Activated CD4-positive, alpha-beta memory T cell treated with anti-CD3 and anti-CD28 coated beads, Interleukin-2, amount 10 ng/mL, durations not matched to agents 7 days and 5 days (primary cell): ENCODE measurements at regions of chr1 and their contacts with region 1.

Region 1: GRCh38 chr1:207885129-207886032 is 25.5 kb downstream of the CD34 start:
- DNase-seq: peak; percentile 77
- H3K4me3 Mint-ChIP-seq: no peak overlapping the region
- H3K27ac Mint-ChIP-seq: peak overlapping the region; percentile 97
- H3K4me1 Mint-ChIP-seq: peaks cover 43% of the 10 kb centered on the region
- H3K27me3 Mint-ChIP-seq: peaks cover 3% of the 10 kb centered on the region

Region 2: GRCh38 chr1:207486198-207486597 is 399.2 kb before region 1 on chr1:
- CTCF ChIA-PET with region 1: no interaction called
- POLR2A ChIA-PET with region 1: no interaction called
- DNase-seq: no peak
- H3K4me3 Mint-ChIP-seq: no peak overlapping the region
- H3K27ac Mint-ChIP-seq: no peak overlapping the region
- H3K4me1 Mint-ChIP-seq: no peaks in the 10 kb centered on the region
- H3K27me3 Mint-ChIP-seq: peaks cover 24% of the 10 kb centered on the region

Region 3: GRCh38 chr1:207863893-207864535 is 21.4 kb before region 1 on chr1:
- CTCF ChIA-PET with region 1: interaction called, 423 read pairs
- POLR2A ChIA-PET with region 1: interaction called, 163 read pairs
- DNase-seq: peak; percentile 71
- H3K4me3 Mint-ChIP-seq: peak overlapping the region; percentile 50
- H3K27ac Mint-ChIP-seq: peak overlapping the region; percentile 86
- H3K4me1 Mint-ChIP-seq: peaks cover 65% of the 10 kb centered on the region
- H3K27me3 Mint-ChIP-seq: no peaks in the 10 kb centered on the region

Region 4: DNA sequence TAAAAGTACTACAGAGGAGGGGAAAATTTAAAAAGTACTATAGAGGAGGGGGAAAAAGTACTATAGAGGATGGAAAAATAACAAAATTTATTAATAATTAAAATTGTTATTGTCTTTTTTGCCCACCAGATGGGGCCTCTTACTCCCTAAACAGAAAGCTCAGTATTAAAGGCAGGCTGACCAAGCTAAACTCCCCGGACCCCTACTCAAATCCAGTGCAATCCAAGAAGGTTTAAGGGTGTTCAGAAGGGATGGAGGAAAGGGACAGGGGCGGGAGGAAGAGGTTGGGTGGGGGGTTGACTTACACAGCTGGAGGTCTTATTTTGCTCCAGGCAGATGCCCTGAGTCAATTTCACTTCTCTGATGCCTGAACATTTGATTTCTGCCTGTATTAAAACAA is 11.8 kb after region 1 on chr1:
- CTCF ChIA-PET with region 1: interaction called, 51 read pairs
- POLR2A ChIA-PET with region 1: interaction called, 4 read pairs
- DNase-seq: no peak
- H3K4me3 Mint-ChIP-seq: no peak overlapping the region
- H3K27ac Mint-ChIP-seq: no peak overlapping the region
- H3K4me1 Mint-ChIP-seq: peaks cover 21% of the 10 kb centered on the region
- H3K27me3 Mint-ChIP-seq: peaks cover 7% of the 10 kb centered on the region

Region 5: DNA sequence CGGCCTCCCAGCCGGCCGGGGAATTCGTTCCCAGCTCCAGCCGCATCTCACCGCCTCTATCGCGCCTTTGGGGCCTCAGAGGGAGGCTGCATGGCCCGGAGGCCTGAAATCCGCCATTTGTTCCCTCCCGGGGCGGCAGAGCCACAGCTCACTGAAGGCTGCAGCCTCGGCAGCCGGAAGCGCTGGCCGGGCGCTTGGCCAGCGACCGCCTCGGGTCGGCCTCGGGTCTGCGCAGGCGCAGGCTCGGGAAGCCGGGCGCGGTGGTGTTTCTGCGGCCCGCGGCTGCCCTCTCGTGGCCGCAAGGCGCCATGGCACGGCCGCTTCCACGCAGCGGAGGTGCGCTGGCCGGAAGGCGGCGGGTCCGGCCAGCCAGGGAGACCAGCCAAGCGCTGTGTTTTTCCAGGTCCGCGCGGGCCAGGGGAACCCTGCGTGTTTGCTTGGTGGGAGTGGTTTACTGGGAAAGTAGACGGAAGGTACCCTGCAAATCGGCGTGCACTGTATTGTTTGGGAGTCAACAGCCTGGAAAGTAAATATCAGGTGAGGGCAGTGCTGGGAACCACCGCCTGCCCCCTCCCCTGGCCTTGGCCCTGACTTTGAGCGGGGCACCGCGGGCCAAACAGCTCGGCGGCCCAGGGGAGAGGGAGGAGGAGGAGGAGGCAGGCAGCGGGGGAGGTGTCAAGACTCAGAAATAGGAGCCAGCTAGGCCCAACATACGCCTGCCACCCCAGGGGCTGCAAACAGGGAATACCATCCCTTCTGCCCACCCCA is 78.2 kb after region 1 on chr1:
- CTCF ChIA-PET with region 1: interaction called, 243 read pairs
- POLR2A ChIA-PET with region 1: interaction called, 30 read pairs
- DNase-seq: peak; percentile 87
- H3K4me3 Mint-ChIP-seq: peak overlapping the region; percentile 74
- H3K27ac Mint-ChIP-seq: peak overlapping the region; percentile 36
- H3K4me1 Mint-ChIP-seq: peaks cover 9% of the 10 kb centered on the region
- H3K27me3 Mint-ChIP-seq: peaks cover 42% of the 10 kb centered on the region

Region 6: DNA sequence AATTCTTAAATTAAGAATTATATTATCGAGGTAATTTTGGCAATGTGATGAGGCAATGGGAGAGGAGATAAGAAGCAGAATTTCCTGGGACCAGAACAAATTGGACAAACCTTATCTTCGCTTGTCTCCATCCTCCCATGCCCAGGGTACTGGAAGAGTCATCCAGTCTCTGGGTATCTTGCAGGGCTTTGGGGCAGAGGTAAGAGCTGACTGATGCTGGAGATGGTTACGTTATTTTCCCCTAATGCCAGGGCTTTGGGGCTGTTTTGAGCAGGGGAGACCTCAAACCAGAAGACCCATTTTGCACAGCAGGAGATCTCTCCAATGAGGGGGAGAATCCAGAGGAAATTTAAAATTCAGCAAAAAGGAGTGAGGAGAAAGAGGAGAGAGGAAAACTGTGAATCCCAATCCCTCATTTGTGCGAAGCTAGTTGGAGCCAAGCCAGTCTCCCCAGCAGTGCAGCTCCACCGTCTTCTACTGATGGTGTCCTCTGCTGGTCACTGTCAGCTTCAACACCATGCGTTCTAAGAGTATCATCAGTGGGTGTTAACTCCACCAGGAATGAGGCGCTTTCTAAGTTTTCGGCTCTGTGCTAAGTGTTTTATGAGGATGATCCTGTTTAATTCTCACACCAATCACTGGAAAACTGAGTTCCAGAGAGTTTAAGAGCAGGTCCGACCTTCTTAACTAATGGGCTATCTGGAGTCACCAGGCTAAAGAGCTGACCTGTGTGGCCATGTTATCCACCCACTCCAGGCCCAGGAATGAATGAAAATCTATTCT is 112.3 kb after region 1 on chr1:
- CTCF ChIA-PET with region 1: interaction called, 23 read pairs
- POLR2A ChIA-PET with region 1: no interaction called
- DNase-seq: peak; percentile 58
- H3K4me3 Mint-ChIP-seq: no peak overlapping the region
- H3K27ac Mint-ChIP-seq: no peak overlapping the region
- H3K4me1 Mint-ChIP-seq: no peaks in the 10 kb centered on the region
- H3K27me3 Mint-ChIP-seq: peaks cover 17% of the 10 kb centered on the region

Region 7: DNA sequence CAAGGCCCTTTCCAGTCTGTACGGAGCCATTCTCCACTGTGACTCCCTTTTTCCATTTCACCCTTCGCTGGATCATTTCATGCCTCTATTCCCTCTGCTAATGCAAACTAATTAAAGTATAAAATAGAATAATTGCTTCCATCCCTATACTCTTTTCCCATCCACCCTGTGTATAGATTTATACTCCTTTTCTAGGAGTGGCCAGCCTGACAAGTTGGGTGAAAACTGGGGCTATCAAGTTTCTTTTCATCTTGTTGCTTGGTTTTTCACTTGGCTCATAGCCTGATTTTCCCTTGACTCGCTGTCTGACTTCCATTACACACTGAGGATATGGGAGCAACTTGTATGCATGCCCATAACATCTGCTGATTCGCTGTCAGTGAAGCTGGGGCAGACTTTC is 251.8 kb after region 1 on chr1:
- CTCF ChIA-PET with region 1: no interaction called
- POLR2A ChIA-PET with region 1: no interaction called
- DNase-seq: no peak
- H3K4me3 Mint-ChIP-seq: no peak overlapping the region
- H3K27ac Mint-ChIP-seq: no peak overlapping the region
- H3K4me1 Mint-ChIP-seq: peaks cover 2% of the 10 kb centered on the region
- H3K27me3 Mint-ChIP-seq: no peaks in the 10 kb centered on the region